PC-9 (cell line): ENCODE measurements at regions of chr14 and their contacts with region 1.

Region 1: DNA sequence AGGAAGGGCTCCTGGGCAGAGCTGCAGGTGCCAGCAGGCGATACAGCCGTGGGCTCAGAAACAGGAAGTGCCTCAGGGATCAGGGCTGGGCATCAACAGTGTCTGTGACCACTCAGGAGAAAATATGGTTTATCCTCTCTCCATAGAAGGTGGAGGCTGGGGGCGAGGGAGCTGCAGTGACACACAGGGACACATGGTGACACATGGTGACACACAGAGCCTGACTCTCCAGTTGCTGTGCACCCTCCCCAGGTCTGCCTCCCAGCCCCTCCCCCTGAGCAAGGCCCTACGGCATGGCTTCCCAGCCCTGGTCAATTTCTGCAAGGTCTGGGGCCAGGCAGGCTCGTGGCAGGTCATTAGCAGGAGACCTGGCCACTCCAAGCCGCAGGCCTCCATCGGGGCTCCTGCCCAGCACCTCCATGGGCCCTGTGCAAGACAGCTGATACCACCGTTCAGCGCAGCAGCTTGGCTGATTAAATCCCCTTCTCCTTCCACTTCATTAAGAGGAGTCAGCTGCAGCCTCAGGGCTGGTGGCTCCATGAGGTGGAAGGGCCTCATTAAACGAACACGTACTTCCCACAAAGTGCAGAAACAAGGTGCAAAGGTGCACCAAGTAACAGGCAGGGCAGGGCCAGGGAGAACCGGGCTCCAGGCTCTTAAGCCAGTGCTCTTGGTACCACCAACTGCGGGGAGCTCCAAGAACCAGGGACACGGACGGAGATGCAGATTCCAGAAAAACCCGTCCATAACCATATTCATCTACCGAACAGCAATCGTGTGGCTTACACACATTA is 60.7 kb downstream of the CCNK start:
- DNase-seq: peak; percentile 27 to 44
- H3K4me3 ChIP-seq: no peak overlapping the region
- H3K27ac ChIP-seq: no peak overlapping the region
- H3K4me1 ChIP-seq: peaks cover 20% of the 10 kb centered on the region
- H3K27me3 ChIP-seq: no peaks in the 10 kb centered on the region
- CTCF ChIP-seq: no peak

Region 2: DNA sequence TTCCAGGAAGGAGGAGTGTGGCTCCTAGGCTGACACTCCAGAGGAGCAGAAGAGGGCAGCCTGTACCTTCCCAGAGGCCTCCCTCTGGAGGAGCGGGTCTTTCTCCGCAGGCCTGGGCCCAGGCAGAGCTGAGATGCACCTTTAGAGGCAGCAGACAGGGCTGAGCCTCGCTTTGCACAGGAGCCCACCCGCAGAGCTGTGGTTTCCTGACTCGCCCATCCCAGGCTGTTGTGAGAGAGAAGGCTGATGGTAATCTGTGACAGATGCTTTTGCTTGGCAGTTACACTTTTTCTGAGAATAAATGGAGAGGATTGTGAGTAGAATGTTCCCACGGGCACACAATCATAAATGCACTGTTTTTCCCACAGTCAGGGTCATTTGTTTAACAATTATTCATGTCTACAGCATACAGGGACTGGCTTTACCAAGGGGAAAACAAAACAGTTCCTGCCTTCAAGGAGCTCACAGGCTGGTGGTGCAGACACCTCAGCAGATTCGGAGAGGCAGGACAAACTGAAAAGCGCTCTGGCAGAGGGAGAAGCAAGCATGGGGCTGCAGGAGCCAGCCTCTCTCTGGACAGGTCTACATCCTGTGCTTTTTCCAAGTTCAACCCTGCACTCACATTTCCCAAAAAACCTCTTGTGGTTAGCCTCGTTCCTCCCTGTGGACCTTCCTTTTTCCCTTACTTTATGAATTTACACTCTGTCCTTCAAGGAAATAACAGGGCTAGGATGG is 537.3 kb after region 1 on chr14:
- CTCF ChIA-PET with region 1: interaction called, 11 read pairs
- POLR2A ChIA-PET with region 1: no interaction called
- intact Hi-C with region 1: no loop called
- DNase-seq: no peak
- H3K4me3 ChIP-seq: no peak overlapping the region
- H3K27ac ChIP-seq: no peak overlapping the region
- H3K4me1 ChIP-seq: no peaks in the 10 kb centered on the region; the same call in none of the 2 replicates
- H3K27me3 ChIP-seq: no peaks in the 10 kb centered on the region
- CTCF ChIP-seq: no peak